ENCODE measurements at regions of chr5 and their contacts with region 1.

Region 1: DNA sequence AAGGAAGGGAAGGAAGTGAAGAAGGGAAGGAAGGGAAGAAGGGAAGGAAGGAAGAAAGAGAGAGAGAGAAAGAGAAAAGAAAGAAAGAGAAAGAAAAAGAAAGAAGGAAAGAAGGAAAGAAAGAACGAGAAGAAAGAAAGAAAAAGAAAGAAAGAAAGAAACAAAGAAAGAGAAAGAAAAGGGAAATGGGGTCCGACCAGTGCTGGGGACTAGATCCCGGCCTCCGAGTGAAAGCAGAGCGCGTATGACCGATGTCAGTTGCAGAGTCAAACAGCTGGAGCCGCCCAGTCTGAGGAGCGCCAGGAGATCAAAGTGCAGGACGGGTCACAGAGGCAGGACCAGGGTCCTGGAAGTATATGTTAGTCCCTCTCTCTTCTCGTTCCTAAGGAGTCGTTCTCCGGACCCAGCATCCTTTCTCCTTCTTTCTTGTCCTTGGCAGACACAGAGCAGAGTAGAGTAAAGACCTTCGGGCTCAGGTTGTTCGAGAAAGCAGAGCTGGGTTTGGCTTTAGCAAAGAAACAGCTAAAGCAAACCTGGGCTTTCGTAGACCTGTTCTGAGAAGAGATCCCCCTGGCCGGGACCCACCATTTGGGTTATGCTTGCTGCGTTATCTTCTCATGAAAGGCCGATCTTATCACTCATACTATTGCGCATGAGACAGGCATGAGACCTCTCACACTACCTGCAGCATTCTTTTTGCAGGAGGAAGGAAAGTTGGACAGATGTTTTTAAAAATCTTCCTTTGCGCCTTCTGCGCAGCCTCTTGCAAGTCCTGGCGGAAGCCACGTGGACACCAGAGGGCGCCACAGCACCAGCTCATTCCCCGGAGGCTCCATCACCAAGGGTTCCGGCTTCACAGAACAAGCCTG is 305.2 kb upstream of the MSX2 start:
- DNase-seq: peak; percentile 62 to 82
- H3K4me3 ChIP-seq: no peak overlapping the region
- H3K27ac ChIP-seq: no peak overlapping the region
- H3K4me1 ChIP-seq: no peaks in the 10 kb centered on the region
- H3K27me3 ChIP-seq: peaks cover 44% of the 10 kb centered on the region
- CTCF ChIP-seq: peak; percentile 89

Region 2: DNA sequence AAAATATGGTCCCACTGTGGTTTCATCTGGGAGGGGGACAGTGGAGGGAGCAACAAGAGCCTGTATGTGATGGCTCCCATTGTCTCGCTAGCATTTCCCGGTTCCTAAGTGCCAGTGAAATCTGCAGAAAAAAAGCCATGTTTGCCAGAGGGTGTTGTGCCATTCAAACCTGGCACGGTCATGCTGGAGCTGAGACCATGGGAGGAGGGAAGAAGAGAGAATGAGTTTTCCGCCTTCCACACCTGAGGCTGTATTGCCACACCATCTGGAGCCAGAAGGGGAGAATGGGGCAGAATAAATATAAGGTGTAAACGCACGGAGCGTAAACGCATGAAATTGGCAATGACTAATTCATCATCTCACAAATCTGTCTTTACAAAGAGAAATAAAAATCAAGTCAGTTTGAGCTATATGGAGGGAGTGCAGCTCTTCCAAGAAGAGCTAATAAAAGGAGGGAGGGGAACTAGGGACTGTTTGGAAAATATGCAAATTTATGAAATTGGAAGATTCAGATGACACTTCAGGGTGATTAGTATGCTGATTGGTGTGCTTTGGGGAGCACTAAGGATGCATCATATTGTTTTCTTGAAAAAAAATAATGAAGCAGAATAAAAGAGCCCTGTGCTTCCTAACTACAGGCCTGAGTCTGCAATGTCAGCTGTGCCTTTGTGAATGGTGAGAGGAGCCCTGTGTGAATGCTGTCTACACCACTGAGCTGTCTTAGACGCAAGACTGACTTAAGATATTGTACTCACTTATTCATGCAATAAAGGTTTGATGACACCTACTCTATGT is 135.8 kb before region 1 on chr5:
- CTCF ChIA-PET with region 1: no interaction called
- POLR2A ChIA-PET with region 1: no interaction called
- intact Hi-C with region 1: no loop called
- DNase-seq: no peak
- H3K4me3 ChIP-seq: no peak overlapping the region
- H3K27ac ChIP-seq: no peak overlapping the region
- H3K4me1 ChIP-seq: no peaks in the 10 kb centered on the region
- H3K27me3 ChIP-seq: peaks cover 63% of the 10 kb centered on the region
- CTCF ChIP-seq: no peak

Region 3: DNA sequence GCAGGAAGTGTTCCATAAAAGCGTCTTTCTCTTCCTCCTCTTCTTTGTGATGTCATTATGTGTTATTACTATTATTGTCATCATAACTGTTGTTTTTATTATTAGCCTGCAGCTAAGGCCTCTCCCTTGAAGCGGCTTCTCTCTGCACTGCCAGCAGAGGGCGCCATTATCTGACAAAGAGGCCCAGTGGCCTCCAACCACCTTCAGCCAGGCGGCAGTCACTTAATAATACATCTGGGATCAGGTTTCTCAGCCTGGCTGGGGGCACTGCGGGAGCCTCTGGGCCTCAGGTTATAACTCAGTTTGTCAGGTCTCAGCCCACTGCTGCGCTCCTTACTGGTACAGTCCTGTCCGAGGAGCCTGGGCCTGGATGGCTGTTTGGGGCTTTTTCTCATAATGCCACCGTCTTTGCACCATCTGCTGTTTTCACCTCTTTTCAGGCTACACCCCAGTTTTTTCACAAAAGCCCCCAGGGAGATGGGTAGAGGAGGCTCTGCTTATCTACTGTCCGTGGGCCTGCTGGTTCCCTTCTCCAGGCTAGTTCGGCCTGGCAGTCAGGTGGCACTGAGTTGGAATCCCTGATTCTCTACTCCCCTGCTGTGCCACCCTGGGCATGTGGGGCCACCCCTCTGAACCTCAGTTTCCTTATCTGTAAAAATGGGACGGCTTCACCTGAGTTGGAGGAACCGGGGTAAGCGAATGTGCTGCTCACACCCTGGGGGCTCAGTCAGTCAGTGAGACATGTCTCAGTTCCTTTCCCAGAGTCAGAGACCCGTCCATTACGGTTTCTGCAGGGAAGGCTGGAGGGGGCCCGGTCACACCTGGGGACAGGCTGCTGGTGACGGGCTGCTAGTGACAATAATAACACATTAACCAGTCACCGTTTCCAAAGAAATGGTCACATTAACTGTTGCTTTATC is 91.6 kb before region 1 on chr5:
- CTCF ChIA-PET with region 1: interaction called, 6 read pairs
- POLR2A ChIA-PET with region 1: no interaction called
- intact Hi-C with region 1: loop called (anchors 1 kb)
- DNase-seq: peak in 1 of 2 experiments; percentile 68
- H3K4me3 ChIP-seq: no peak overlapping the region
- H3K27ac ChIP-seq: no peak overlapping the region
- H3K4me1 ChIP-seq: no peaks in the 10 kb centered on the region
- H3K27me3 ChIP-seq: peaks cover 71% of the 10 kb centered on the region
- CTCF ChIP-seq: peak; percentile 90

Region 4: GRCh38 chr5:174735498-174736330 is 316.6 kb after region 1 on chr5:
- CTCF ChIA-PET with region 1: no interaction called
- POLR2A ChIA-PET with region 1: no interaction called
- intact Hi-C with region 1: loop called (anchors 5 kb)
- DNase-seq: peak in 1 of 2 experiments; percentile 3
- H3K4me3 ChIP-seq: no peak overlapping the region
- H3K27ac ChIP-seq: no peak overlapping the region
- H3K4me1 ChIP-seq: no peaks in the 10 kb centered on the region
- H3K27me3 ChIP-seq: peaks cover 82% of the 10 kb centered on the region
- CTCF ChIP-seq: no peak

Region 5: GRCh38 chr5:174755103-174755502 is 335.9 kb after region 1 on chr5:
- CTCF ChIA-PET with region 1: interaction called, 14 read pairs
- POLR2A ChIA-PET with region 1: no interaction called
- intact Hi-C with region 1: no loop called
- DNase-seq: no peak
- H3K4me3 ChIP-seq: no peak overlapping the region
- H3K27ac ChIP-seq: no peak overlapping the region
- H3K4me1 ChIP-seq: no peaks in the 10 kb centered on the region
- H3K27me3 ChIP-seq: peaks cover 45% of the 10 kb centered on the region; the same call in 1 of the 2 replicates
- CTCF ChIP-seq: no peak; the same call in 1 of the 2 replicates

Region 6: DNA sequence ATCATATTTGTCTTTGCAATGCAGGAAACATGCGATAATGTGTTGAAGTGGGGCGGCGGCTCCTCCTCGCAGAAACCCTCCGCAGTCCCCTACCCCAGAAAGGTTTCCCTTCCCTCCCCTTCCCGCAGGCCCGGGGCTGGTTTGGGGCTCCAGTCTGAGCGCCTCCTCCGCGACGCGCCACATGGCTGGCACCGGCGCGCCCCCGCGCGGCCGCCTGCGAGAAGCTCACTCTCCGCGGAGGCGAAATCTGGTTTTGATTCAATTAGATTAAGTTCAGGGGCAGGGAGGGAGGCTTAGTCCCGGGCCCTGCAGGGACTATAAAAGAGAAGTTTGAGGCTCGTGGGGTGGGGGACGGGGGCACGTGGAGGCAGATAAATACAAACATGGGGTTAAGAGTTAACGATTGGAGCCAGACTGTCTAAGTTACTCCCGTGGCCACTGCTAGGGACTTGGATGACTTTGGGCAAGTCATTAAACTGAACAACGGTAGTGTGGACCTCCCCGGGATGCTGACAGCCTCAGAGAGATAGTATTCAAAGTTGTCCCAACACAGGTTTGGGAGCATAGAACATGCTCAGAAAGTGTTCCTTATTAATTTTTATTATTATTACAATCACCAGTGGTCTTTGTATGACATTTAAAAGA is 374.6 kb after region 1 on chr5:
- CTCF ChIA-PET with region 1: interaction called, 8 read pairs
- POLR2A ChIA-PET with region 1: no interaction called
- intact Hi-C with region 1: loop called (anchors 1 kb)
- DNase-seq: peak in 1 of 2 experiments; percentile 53
- H3K4me3 ChIP-seq: no peak overlapping the region
- H3K27ac ChIP-seq: no peak overlapping the region
- H3K4me1 ChIP-seq: no peaks in the 10 kb centered on the region
- H3K27me3 ChIP-seq: peaks cover 53% of the 10 kb centered on the region
- CTCF ChIP-seq: peak; percentile 90

Region 7: DNA sequence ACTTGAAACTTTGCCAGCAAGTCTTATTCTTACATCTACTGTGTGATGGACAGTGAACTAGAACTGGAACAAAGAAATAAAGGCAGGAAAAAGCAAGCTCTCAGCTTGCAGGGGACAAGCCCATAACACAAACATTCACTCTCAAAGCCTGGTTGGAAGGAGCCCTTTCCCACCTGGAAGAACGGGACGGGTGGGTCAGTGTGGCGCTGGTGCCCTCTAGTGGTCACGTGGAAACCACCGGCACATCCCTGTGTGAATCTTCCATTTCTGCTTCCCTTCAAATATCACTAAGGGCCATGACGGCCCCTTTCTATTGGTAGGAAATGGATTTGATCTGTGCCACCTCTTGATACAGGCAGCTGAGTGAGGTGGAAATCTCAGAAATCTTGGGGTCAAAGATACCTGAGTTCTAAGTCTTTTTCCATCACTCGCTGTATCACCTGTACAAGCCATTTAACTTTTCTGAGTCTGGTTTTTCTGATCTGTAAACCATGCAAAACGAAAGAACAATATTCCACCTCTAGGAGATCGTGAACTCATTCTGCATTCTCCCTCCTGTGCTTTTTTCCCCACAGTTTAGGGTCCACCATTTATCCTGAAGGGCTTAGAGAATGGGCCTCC is 516.8 kb after region 1 on chr5:
- CTCF ChIA-PET with region 1: interaction called, 5 read pairs
- POLR2A ChIA-PET with region 1: no interaction called
- intact Hi-C with region 1: loop called (anchors 1 kb)
- DNase-seq: peak in 1 of 2 experiments; percentile 53
- H3K4me3 ChIP-seq: no peak overlapping the region
- H3K27ac ChIP-seq: no peak overlapping the region
- H3K4me1 ChIP-seq: no peaks in the 10 kb centered on the region
- H3K27me3 ChIP-seq: peaks cover 33% of the 10 kb centered on the region
- CTCF ChIP-seq: peak; percentile 87